ENCODE measurements at regions of chr11 and their contacts with region 1.

Region 1: GRCh38 chr11:20110908-20111669 is 49.2 kb downstream of the DBX1 start:
- DNase-seq: no peak
- ATAC-seq: peak; percentile 47

Region 2: GRCh38 chr11:19951558-19952115 is 159.5 kb before region 1 on chr11:
- intact Hi-C with region 1: loop called (anchors 5 kb)
- DNase-seq: no peak
- ATAC-seq: peak; percentile 34

Region 3: DNA sequence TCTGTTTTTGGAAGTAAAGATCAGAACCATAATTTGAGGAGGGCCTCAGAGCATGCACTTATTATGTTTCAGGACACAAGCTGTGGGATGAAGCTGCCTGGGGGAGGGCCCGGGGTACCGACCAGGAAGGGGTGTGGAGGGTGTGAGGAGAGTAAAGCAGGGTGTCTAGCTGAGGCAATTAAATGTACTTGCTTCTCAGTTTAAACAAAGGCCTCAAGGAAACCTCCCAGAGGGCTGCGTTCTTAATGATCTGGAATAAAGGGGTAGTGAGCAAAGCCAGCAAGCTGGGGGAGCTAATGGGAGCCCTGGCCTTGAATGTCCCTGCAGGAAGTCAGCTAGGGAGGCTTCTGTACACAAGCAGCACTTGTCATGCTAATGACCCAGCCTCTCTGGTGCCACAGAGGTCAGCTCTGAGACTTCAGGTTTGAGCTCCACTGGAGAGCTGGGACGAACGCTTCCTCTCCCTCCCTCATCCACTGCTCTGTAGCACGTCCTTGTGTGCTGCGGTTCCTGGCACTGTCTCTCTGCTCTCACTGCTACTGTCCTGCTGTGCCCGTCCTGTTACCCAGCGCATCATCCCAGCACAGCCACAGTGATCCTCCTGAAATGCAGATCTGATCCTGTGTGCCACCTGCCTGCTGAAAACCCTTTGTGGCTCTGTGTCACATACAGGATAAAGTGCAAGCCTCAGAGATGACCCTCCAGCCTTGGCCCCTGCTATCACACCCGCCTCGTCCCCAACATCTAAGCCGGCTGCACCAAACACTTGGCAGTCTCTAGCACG is 110.5 kb before region 1 on chr11:
- intact Hi-C with region 1: no loop called
- DNase-seq: peak; percentile 50
- ATAC-seq: peak; percentile 88

Region 4: DNA sequence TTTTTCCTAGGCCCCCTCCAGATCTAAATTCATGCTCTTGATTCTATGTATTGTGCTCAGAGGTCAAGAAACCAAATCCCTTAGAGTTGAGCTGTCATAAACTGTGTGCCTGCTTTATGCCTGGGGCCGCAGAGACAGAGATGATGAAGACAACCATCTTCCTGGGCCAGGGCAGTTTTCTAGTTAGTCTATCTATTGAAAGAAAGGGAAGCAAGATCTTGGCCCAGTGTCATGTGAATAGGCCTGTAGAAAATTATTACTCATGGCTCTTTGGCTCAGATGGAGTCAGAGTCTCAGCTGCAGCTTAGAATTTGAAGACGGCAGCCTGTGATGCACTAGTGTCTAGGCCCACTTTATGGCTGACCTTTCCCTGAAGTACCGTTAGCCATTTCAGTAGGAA is 62.9 kb before region 1 on chr11:
- intact Hi-C with region 1: loop called (anchors 5 kb)
- DNase-seq: no peak
- ATAC-seq: no peak

Region 5: DNA sequence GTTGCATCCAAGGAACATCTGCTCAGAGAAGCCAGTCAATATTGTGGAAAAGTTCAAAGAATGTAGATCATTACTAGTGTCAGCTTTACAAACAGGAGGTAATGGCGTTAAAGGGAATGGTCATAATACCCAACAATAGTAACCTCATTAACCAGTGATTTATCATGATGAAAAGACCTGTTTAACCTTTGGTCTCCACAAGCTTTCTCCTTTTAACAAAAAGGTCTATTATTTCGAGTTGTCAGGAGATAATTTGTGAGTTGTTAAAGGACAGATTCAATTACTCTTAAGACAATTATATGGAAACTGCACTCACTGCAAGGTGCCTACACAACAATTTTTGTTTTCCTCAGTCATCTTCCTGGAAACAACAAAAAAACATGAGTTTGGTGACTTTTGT is 178.6 kb after region 1 on chr11:
- intact Hi-C with region 1: no loop called
- DNase-seq: no peak
- ATAC-seq: no peak

Measured in left ventricle myocardium superior (tissue), 1 donor.